BJ (cell line): ENCODE measurements at regions of chr13 and their contacts with region 1.

Region 1: DNA sequence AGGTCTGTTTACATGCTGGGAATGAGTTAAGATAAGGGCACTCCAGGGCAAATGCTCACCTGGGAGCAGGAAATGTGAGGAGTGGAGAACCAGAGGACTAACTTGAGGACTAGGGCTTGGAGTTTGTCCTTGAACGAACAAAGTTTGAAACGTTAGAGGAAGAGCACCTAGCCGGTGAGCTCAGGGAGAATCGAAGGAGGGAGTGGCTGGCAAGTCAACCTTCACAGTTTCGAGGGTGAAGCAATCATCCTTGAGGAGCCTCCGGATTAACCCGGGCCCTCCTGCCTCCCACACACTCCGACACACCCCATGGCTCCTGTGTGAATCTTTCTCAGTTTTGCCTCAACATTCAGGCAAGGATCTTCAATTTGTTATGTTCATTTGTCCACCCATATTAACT is 58.6 kb downstream of the LMO7 start:
- DNase-seq: no peak
- H3K4me3 ChIP-seq: no peak overlapping the region
- H3K27me3 ChIP-seq: no peaks in the 10 kb centered on the region
- CTCF ChIP-seq: no peak

Region 2: GRCh38 chr13:75704579-75705320 is 10.0 kb after region 1 on chr13:
- CTCF ChIA-PET with region 1: interaction called, 23 read pairs
- POLR2A ChIA-PET with region 1: no interaction called
- DNase-seq: no peak
- H3K4me3 ChIP-seq: no peak overlapping the region
- H3K27me3 ChIP-seq: no peaks in the 10 kb centered on the region
- CTCF ChIP-seq: no peak

Region 3: DNA sequence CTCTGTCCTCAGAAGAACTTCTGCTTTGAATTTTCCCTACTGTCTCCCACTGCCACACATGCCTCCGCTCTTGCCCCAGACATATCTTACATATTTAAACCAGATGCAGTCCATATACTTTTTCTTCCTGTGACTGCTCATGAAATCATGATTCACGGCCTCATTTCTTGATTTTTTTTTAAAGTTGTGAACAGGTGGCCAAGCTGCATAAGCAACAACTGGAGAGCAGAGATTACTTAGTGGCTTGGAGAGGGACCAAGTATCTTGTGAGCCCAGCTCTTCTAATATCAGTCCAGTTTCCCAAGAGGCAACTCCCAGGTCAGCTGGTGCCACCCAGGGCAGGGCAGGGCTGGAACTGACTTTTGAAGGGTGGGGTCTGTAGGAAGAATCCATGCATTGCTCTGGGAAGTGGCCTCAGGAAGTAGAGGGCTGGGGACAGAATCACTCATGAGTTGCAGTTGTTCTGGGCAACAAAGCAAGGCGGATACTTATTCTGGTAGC is 93.8 kb after region 1 on chr13:
- CTCF ChIA-PET with region 1: interaction called, 12 read pairs
- POLR2A ChIA-PET with region 1: no interaction called
- DNase-seq: peak; percentile 96
- H3K4me3 ChIP-seq: no peak overlapping the region
- H3K27me3 ChIP-seq: no peaks in the 10 kb centered on the region
- CTCF ChIP-seq: no peak

Region 4: GRCh38 chr13:75803164-75803611 is 108.5 kb after region 1 on chr13:
- CTCF ChIA-PET with region 1: interaction called, 17 read pairs
- POLR2A ChIA-PET with region 1: no interaction called
- DNase-seq: no peak
- H3K4me3 ChIP-seq: no peak overlapping the region
- H3K27me3 ChIP-seq: no peaks in the 10 kb centered on the region
- CTCF ChIP-seq: no peak

Region 5: GRCh38 chr13:75832812-75833211 is 138.1 kb after region 1 on chr13:
- CTCF ChIA-PET with region 1: interaction called, 20 read pairs
- POLR2A ChIA-PET with region 1: no interaction called
- DNase-seq: no peak
- H3K4me3 ChIP-seq: no peak overlapping the region
- H3K27me3 ChIP-seq: no peaks in the 10 kb centered on the region
- CTCF ChIP-seq: no peak

Region 6: GRCh38 chr13:75860935-75861334 is 166.2 kb after region 1 on chr13:
- CTCF ChIA-PET with region 1: interaction called, 16 read pairs
- POLR2A ChIA-PET with region 1: no interaction called
- DNase-seq: no peak
- H3K4me3 ChIP-seq: no peak overlapping the region
- H3K27me3 ChIP-seq: no peaks in the 10 kb centered on the region
- CTCF ChIP-seq: no peak

Region 7: GRCh38 chr13:75870397-75870903 is 175.7 kb after region 1 on chr13:
- CTCF ChIA-PET with region 1: interaction called, 24 read pairs
- POLR2A ChIA-PET with region 1: no interaction called
- DNase-seq: no peak
- H3K4me3 ChIP-seq: peak overlapping the region; percentile 43
- H3K27me3 ChIP-seq: no peaks in the 10 kb centered on the region
- CTCF ChIP-seq: peak; percentile 74